ENCODE measurements at regions of chr17 and their contacts with region 1.

Region 1: GRCh38 chr17:48259694-48260291 is 152.2 kb downstream of the SNX11 start:
- DNase-seq: peak; percentile 62
- H3K4me3 ChIP-seq: no peak overlapping the region
- H3K27ac ChIP-seq: no peak overlapping the region
- H3K4me1 ChIP-seq: peaks cover 18% of the 10 kb centered on the region
- H3K27me3 ChIP-seq: no peaks in the 10 kb centered on the region
- CTCF ChIP-seq: peak; percentile 49 to 53
- POLR2A ChIP-seq: no peak

Region 2: GRCh38 chr17:47810205-47810821 is 449.5 kb before region 1 on chr17:
- CTCF ChIA-PET with region 1: no interaction called
- POLR2A ChIA-PET with region 1: no interaction called
- dilution Hi-C with region 1: no loop called
- intact Hi-C with region 1: no loop called
- DNase-seq: peak; percentile 65
- H3K4me3 ChIP-seq: no peak overlapping the region
- H3K27ac ChIP-seq: peak overlapping the region; percentile 54
- H3K4me1 ChIP-seq: peaks cover 9% of the 10 kb centered on the region
- H3K27me3 ChIP-seq: no peaks in the 10 kb centered on the region
- CTCF ChIP-seq: no peak
- POLR2A ChIP-seq: no peak

Region 3: GRCh38 chr17:48228721-48229120 is 31.1 kb before region 1 on chr17:
- CTCF ChIA-PET with region 1: interaction called, 289 read pairs
- POLR2A ChIA-PET with region 1: no interaction called
- dilution Hi-C with region 1: no loop called
- intact Hi-C with region 1: no loop called
- DNase-seq: no peak
- H3K4me3 ChIP-seq: no peak overlapping the region
- H3K27ac ChIP-seq: no peak overlapping the region
- H3K4me1 ChIP-seq: peaks cover 9% of the 10 kb centered on the region
- H3K27me3 ChIP-seq: no peaks in the 10 kb centered on the region
- CTCF ChIP-seq: no peak
- POLR2A ChIP-seq: no peak

Region 4: GRCh38 chr17:48283411-48283810 is 23.6 kb after region 1 on chr17:
- CTCF ChIA-PET with region 1: interaction called, 23 read pairs
- POLR2A ChIA-PET with region 1: no interaction called
- dilution Hi-C with region 1: no loop called
- intact Hi-C with region 1: no loop called
- DNase-seq: no peak
- H3K4me3 ChIP-seq: no peak overlapping the region
- H3K27ac ChIP-seq: no peak overlapping the region
- H3K4me1 ChIP-seq: no peaks in the 10 kb centered on the region
- H3K27me3 ChIP-seq: no peaks in the 10 kb centered on the region
- CTCF ChIP-seq: no peak
- POLR2A ChIP-seq: no peak

Region 5: DNA sequence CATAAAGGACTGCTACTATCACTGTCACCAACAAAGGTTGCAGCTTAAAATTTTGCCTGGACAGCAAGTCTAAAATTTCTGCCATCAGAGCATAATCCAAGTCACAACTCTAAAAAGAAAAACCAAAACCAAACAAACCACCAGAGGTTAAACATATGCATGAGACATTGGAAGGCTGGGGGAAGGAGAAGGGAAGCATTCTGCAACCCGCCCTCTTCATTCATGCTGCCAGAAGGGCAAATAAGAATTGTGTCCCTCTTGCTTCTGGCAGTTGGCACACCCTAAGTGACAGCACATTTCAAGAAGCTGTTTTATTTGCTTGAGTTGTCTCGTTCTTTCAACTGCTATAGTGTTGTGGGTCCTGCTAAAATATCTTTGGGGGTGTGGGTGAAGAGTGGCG is 70.6 kb after region 1 on chr17:
- CTCF ChIA-PET with region 1: interaction called, 53 read pairs
- POLR2A ChIA-PET with region 1: no interaction called
- dilution Hi-C with region 1: no loop called
- intact Hi-C with region 1: no loop called
- DNase-seq: no peak
- H3K4me3 ChIP-seq: no peak overlapping the region
- H3K27ac ChIP-seq: no peak overlapping the region
- H3K4me1 ChIP-seq: no peaks in the 10 kb centered on the region
- H3K27me3 ChIP-seq: no peaks in the 10 kb centered on the region
- CTCF ChIP-seq: no peak
- POLR2A ChIP-seq: no peak

Region 6: DNA sequence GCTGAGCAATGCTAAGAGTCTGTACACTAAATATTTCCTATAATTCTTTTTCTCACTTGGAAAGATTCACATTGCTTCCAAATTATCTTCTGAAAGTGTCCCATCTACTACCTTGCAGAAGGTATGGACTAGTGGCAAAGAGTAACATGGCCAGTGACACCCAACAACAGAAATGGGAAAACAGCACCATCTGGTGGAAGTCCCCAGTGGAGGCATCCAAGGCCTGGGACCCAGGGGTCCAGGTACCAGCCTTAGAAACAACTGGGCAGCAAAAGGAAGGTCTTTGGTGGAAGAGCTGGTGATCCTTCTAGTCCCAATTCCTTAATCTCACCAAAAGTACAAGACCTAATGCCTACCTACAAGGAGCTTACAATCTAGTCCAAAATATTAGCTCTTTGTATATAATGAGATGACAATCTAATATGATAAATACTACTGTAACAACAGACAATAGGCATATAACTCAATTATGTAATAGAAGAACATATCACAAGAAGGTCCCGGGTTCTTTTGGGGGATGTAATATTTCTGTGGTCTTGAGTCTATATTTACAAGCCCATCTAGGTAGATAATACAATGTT is 114.9 kb after region 1 on chr17:
- CTCF ChIA-PET with region 1: interaction called, 17 read pairs
- POLR2A ChIA-PET with region 1: no interaction called
- dilution Hi-C with region 1: no loop called
- intact Hi-C with region 1: loop called (anchors 1 kb)
- DNase-seq: peak; percentile 26
- H3K4me3 ChIP-seq: no peak overlapping the region
- H3K27ac ChIP-seq: no peak overlapping the region
- H3K4me1 ChIP-seq: no peaks in the 10 kb centered on the region
- H3K27me3 ChIP-seq: peaks cover 45 to 62% of the 10 kb centered on the region in 2 experiments
- CTCF ChIP-seq: peak; percentile 64 to 65
- POLR2A ChIP-seq: no peak

Region 7: GRCh38 chr17:48618256-48618897 is 358.6 kb after region 1 on chr17:
- CTCF ChIA-PET with region 1: interaction called, 37 read pairs
- POLR2A ChIA-PET with region 1: interaction called, 6 read pairs
- dilution Hi-C with region 1: no loop called
- intact Hi-C with region 1: loop called (anchors 1 kb)
- DNase-seq: peak; percentile 83
- H3K4me3 ChIP-seq: peak overlapping the region; percentile 3 to 46 (median 30)
- H3K27ac ChIP-seq: no peak overlapping the region
- H3K4me1 ChIP-seq: peaks cover 27% of the 10 kb centered on the region
- H3K27me3 ChIP-seq: peaks cover 66 to 79% of the 10 kb centered on the region in 2 experiments
- CTCF ChIP-seq: peak; percentile 91 to 99
- POLR2A ChIP-seq: no peak

Measured in endothelial cell of umbilical vein (primary cell).